Tibial artery (tissue), 4 donors: ENCODE measurements at regions of chr19 and their contacts with region 1.

Region 1: DNA sequence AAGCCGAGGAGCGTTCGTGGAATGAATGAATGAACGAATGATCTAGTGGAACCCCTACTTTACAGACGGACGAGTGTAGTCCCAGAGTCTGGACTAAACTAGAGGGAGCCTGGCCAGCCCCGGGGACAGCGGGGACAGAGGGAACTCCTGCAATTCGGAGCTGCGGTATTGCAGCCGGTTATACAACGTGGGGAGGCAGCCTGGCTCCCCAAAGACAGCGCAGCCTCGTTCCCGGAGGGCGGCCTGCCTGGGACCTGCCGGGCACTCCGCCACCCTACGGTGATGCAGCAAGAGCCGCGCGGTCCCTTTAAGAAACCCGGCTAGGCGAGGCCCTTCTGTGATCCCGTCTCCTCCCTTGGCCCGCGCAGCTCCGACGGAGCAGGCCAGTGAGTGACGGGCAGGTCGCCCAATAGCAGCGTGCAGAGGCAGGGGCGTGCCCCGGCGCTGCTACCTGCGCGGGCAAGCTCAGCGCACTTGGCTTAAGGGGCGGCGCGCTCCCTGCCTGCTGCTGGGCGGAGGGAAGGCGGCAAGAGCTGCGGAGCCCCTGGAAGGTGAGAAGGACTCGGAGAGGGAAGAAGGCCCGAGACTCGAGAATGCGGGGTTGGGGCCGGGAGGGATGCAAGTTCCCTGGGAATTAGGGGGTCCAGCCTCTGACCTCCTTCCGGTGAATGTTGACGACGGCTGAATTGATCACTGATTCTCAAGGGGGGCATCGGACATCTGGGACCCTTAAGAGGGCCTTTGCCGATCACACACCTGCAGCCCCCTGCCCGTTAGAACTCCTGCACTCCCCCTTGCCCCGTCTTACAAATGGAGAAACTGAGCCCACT is at the start of gene ABCA7:
- DNase-seq: peak; percentile 95 to 98
- H3K4me3 ChIP-seq: peak within 1 kb of the TSS; percentile 47 to 48
- H3K27ac ChIP-seq: peak within 1 kb of the TSS in 1 of 2 donors; percentile 62
- H3K4me1 ChIP-seq: peaks cover 0 to 56% (median 40%) of the 10 kb centered on the region in 4 donors
- H3K27me3 ChIP-seq: peaks cover 0 to 27% of the 10 kb centered on the region in 2 donors
- CTCF ChIP-seq: no peak

Region 2: DNA sequence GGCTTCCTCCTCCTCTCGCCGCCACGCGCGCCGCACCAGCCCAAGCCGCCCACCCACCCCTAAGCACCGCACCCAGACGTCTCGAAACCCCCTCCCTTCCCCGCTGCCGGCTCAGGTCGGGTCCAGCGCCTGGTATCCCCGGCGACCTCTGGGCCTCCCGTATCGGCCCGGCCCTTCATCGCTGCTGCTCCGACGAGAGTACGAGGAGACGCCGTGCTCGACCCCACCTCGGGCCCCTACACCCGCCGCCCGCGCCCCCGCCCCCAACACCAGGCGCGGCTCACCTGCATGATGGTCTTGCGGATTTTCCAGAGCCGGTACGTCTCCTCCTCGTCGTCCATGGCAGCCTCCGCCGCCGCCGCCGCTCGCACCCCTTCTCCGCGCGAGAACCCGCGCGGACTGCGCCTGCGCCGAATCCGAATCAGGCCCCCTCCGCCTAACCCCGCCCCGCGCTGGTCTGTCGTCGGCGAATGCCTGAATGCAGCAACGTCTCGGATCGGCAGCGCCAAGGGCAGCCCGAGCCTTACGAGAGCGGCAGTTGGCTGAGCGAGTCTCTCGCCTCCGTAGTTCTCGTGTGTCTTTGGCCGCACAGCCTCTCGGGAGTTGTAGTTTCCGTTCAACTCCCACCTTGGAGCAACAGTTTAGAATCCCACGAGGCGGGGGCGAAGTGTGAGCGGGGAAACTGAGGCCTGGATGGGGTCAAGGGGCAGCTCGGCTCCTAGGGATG is 55.3 kb after region 1 on chr19 and contains the start of gene POLR2E:
- intact Hi-C with region 1: loop called (anchors 5 kb)
- DNase-seq: peak; percentile 99
- H3K4me3 ChIP-seq: peak within 1 kb of the TSS; percentile 78 to 83
- H3K27ac ChIP-seq: peak within 1 kb of the TSS; percentile 78 to 79
- H3K4me1 ChIP-seq: peaks cover 0 to 51% (median 42%) of the 10 kb centered on the region in 4 donors
- H3K27me3 ChIP-seq: no peaks in the 10 kb centered on the region
- CTCF ChIP-seq: no peak

Region 3: GRCh38 chr19:1131738-1132551 is 92.1 kb after region 1 on chr19:
- intact Hi-C with region 1: no loop called
- DNase-seq: peak; percentile 92
- H3K4me3 ChIP-seq: peak overlapping the region; percentile 64 to 67
- H3K27ac ChIP-seq: peak overlapping the region; percentile 86
- H3K4me1 ChIP-seq: peaks cover 0 to 61% (median 48%) of the 10 kb centered on the region in 4 donors
- H3K27me3 ChIP-seq: no peaks in the 10 kb centered on the region
- CTCF ChIP-seq: peak; percentile 17 to 47